ENCODE measurements at regions of chr4 and their contacts with region 1.

Region 1: DNA sequence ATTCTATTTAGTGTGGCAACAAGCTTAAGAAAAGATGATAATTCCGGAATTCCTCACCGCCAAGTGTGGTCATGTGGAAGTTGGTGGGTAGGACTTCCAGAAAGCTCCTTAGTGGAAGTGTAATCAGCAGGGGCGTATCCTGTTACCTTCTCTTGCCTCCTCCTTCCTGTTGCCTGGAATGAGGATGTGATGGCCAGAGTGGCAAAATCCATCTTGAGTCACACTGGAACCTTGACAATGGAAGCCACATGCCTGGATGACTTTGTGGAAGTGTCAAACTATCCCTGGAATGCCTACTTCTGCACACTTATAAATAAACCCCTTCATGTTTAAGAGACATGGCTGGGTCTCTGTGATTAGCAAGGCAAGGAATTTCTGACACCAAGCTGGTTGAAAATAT is 191.0 kb downstream of the PRDM5 start:
- DNase-seq: no peak
- ATAC-seq: no peak

Region 2: DNA sequence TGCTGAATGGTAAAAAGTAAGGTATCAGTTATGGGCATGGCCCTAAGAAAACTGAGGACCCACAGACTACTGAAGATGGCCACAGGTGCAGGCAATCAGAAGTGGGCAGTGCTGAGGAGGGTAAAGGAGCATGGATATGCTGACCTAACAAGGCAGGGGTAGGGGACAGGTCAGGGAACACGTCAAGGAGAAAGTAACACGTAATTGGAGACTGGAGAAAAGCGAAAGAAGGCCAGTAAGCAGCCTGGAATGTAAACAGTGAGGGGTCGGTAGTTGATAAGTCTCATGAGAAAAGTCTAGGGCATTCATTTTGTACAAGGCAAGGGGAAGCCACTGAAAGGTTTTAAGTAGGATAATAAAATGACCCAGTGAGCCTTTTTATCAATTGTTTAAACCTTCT is 37.7 kb after region 1 on chr4:
- intact Hi-C with region 1: loop called (anchors 2 kb)
- DNase-seq: no peak
- ATAC-seq: no peak

Measured in left ventricle myocardium superior (tissue), 1 donor.